Astrocyte of the cerebellum (primary cell): ENCODE measurements at regions of chr3 and their contacts with region 1.

Region 1: GRCh38 chr3:9379327-9379726 is 16.5 kb downstream of the THUMPD3 start:
- DNase-seq: no peak
- H3K4me3 ChIP-seq: no peak overlapping the region
- CTCF ChIP-seq: no peak

Region 2: GRCh38 chr3:9452417-9452816 is 73.1 kb after region 1 on chr3:
- in situ Hi-C with region 1: loop called (anchors 5 kb)
- DNase-seq: no peak
- H3K4me3 ChIP-seq: no peak overlapping the region
- CTCF ChIP-seq: no peak